Ovary (tissue), 10 donors: ENCODE measurements at regions of chr9 and their contacts with region 1.

Region 1: GRCh38 chr9:33374634-33375213 is 27.6 kb downstream of the AQP7 start:
- DNase-seq: peak; percentile 73 to 87 (median 75)
- H3K4me3 ChIP-seq: no peak overlapping the region
- H3K27ac ChIP-seq: no peak overlapping the region
- H3K4me1 ChIP-seq: peaks cover 12% of the 10 kb centered on the region
- H3K27me3 ChIP-seq: no peaks in the 10 kb centered on the region
- CTCF ChIP-seq: peak; percentile 74 to 92 (median 84)
- EP300 ChIP-seq: no peak
- POLR2A ChIP-seq: no peak

Region 2: DNA sequence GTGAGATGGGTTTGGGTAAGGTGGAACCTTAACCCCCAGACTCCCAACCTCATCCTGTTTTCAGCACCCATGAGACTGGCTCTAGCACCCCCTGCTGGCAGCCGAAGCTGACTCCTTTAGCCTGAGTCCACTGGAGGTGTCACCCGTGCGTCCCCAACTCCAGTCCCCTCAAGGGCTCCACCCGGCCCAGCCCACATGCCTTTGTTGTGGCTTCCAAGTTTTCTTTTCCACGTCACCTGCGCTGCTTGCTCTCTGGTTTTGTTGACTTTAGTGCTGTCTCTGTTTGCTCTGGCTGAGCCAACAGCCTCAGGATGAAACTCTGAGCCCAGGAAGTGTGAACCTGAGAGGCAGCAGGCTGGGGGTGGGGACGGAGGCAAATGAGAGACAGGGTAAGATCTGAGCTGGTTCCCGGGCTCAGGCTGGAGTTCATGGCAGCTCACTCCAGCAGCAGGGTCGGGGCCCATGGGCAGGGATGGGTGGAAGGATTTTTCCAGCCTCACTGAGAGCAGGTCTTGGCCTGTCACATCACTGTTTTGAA is 40.8 kb after region 1 on chr9:
- intact Hi-C with region 1: loop called in 2 of 4 experiments (anchors 2 to 5 kb)
- DNase-seq: peak; percentile 64 to 82 (median 78)
- H3K4me3 ChIP-seq: no peak overlapping the region
- H3K27ac ChIP-seq: no peak overlapping the region
- H3K4me1 ChIP-seq: peaks cover 2% of the 10 kb centered on the region
- H3K27me3 ChIP-seq: no peaks in the 10 kb centered on the region
- CTCF ChIP-seq: peak; percentile 52 to 63 (median 63)
- EP300 ChIP-seq: no peak
- POLR2A ChIP-seq: no peak